Colonic mucosa (tissue), 4 donors: ENCODE measurements at regions of chr2 and their contacts with region 1.

Region 1: DNA sequence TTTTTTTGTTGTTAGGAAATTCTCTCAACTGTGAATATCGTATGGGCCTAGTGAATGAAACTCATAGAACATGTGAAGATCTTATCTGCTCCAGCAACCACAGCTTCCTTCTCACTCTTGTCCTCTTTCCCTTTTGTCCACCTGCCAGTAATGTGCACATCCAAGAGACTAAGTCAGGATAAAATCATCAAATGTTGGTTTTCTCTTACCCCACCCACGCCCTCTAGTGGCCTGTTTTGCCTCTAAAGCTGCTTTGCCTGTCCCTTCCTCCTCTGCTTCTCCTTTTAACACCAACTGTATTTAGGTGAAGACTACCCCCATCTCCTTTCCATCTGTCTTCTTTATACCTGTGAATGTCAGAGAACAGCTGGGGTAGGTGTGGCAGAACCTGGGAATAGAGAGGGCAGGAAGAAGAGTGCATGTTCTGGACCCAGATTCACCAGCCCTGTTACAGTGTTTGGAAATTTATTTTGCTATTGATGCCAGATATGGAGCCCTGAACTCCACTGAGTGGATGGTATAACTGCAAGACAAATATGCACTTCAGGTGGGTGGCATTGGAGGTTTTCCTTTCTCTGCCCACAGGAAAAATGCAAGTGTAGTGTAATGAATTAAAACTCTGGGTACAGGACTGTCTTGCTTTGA is 8.4 kb upstream of the MGAT5 start:
- DNase-seq: peak; percentile 89
- H3K4me3 ChIP-seq: no peak overlapping the region
- H3K27ac ChIP-seq: no peak overlapping the region
- H3K4me1 ChIP-seq: no peaks in the 10 kb centered on the region
- H3K27me3 ChIP-seq: no peaks in the 10 kb centered on the region
- CTCF ChIP-seq: peak; percentile 65

Region 2: DNA sequence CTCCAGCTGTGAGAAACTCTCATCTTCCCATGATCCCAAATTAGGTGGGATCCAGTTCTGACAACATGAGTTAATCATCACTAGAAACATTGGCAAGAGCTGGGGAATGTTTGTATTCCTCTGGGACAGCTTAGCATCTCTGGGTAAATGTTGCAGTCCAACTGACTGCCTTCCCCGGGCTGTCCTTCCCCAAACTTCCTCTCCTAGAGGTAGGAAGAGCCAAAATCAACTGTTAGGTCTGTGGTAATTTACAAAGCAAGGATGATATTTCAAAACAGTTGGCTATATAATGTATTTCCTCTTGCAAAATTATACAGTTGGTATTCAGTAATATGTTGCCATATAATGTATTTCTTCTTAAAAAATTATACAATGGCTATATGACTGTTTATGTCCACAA is 156.9 kb after region 1 on chr2:
- intact Hi-C with region 1: loop called (anchors 10 kb)
- DNase-seq: no peak
- H3K4me3 ChIP-seq: no peak overlapping the region
- H3K27ac ChIP-seq: no peak overlapping the region
- H3K4me1 ChIP-seq: peaks cover 2% of the 10 kb centered on the region
- H3K27me3 ChIP-seq: no peaks in the 10 kb centered on the region
- CTCF ChIP-seq: no peak